H1 (cell line): ENCODE measurements at regions of chr7 and their contacts with region 1.

Region 1: DNA sequence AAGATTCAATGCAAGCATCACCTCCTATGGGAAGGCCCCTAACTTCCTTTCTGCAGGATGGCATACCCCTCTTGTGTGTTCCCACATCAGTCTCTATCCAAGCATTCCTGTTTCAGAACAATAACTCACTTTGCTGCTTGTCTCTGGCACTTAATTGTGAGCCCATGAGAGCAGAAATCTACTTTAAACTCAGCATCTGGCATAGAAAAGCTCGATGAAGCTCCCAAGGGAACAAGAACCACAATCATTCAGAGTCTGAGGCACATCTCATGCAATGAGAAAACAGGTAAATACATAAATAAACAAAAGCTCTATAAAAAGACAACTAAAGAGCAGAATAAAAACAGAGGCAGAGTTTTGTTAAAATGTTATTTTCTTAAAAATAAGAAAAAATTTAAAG is 66.2 kb downstream of the VPS41 start:
- DNase-seq: no peak
- H3K4me3 ChIP-seq: no peak overlapping the region
- H3K27ac ChIP-seq: no peak overlapping the region
- H3K4me1 ChIP-seq: no peaks in the 10 kb centered on the region; a peak in 1 of 7 replicates
- H3K27me3 ChIP-seq: no peaks in the 10 kb centered on the region
- CTCF ChIP-seq: no peak
- EP300 ChIP-seq: no peak
- POLR2A ChIP-seq: no peak
- RAD21 ChIP-seq: no peak

Region 2: DNA sequence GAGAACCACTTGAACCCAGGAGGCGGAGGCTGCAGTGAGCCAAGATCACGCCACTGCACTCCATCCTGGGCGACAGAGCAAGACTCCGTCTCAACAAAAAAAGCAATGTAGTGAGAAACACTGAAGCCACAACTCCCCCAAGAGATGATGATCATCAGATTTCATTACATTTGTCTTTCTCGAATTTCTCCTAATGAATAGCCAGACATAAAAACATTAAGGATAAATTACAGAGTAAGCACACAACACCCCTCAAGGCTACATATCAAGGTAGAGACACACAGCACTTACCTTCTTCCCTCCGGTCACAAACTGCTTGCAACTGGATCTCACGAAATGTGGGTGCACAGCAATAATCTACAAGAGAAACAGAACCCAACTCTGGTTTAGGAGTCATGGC is 25.2 kb before region 1 on chr7:
- CTCF ChIA-PET with region 1: no interaction called
- POLR2A ChIA-PET with region 1: no interaction called
- DNase-seq: no peak
- H3K4me3 ChIP-seq: no peak overlapping the region
- H3K27ac ChIP-seq: no peak overlapping the region
- H3K4me1 ChIP-seq: no peaks in the 10 kb centered on the region
- H3K27me3 ChIP-seq: no peaks in the 10 kb centered on the region
- CTCF ChIP-seq: no peak
- EP300 ChIP-seq: no peak
- POLR2A ChIP-seq: no peak
- RAD21 ChIP-seq: no peak

Region 3: GRCh38 chr7:38881015-38881414 is 38.3 kb after region 1 on chr7:
- CTCF ChIA-PET with region 1: interaction called, 11 read pairs
- POLR2A ChIA-PET with region 1: no interaction called
- DNase-seq: no peak
- H3K4me3 ChIP-seq: no peak overlapping the region
- H3K27ac ChIP-seq: no peak overlapping the region
- H3K4me1 ChIP-seq: peaks cover 0 to 2% (median under 1%) of the 10 kb centered on the region in 4 experiments; a peak in 1 of 7 replicates
- H3K27me3 ChIP-seq: no peaks in the 10 kb centered on the region
- CTCF ChIP-seq: peak; percentile 22 to 58 (median 25); a peak in 3 of 4 replicates
- EP300 ChIP-seq: no peak
- POLR2A ChIP-seq: no peak
- RAD21 ChIP-seq: peak; percentile 32 to 43; a peak in 3 of 4 replicates